ENCODE measurements at regions of chr11 and their contacts with region 1.

Region 1: GRCh38 chr11:47980245-47981049 is at the start of gene PTPRJ:
- DNase-seq: peak; percentile 71
- ATAC-seq: peak; percentile 66
- H3K4me3 Mint-ChIP-seq: peak within 1 kb of the TSS; percentile 86
- H3K27ac Mint-ChIP-seq: peak within 1 kb of the TSS; percentile 2
- H3K4me1 Mint-ChIP-seq: peaks cover 33% of the 10 kb centered on the region
- H3K27me3 Mint-ChIP-seq: no peaks in the 10 kb centered on the region
- CTCF ChIP-seq: no peak
- total RNA-seq, gene PTPRJ: 18.8 and 19.2 TPM in 2 replicates

Region 2: DNA sequence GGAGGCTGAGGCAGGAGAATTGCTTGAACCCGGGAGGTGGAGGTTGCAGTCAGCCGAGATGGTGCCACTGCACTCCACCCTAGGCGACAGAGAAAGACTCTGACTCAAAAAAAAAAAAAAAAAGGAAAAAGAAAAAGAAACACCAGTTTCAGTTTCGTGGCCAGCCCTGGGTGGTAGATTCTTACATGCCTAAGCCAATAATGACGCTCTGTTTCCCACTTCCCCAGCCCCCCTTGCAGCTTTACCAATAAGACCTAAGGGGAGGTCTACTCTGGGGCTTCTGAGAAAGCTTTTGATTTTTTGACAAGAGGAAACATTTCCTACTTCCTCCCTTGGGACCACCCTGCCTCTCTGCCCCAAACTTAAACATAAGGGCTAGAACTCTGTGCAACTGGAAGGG is 30.1 kb before region 1 on chr11:
- CTCF ChIA-PET with region 1: no interaction called
- POLR2A ChIA-PET with region 1: interaction called, 4 read pairs
- intact Hi-C with region 1: loop called (anchors 1 kb)
- DNase-seq: peak; percentile 47
- ATAC-seq: peak; percentile 97
- H3K4me3 Mint-ChIP-seq: peak overlapping the region; percentile 26
- H3K27ac Mint-ChIP-seq: peak overlapping the region; percentile 79
- H3K4me1 Mint-ChIP-seq: peaks cover 54% of the 10 kb centered on the region
- H3K27me3 Mint-ChIP-seq: no peaks in the 10 kb centered on the region
- CTCF ChIP-seq: no peak

Region 3: DNA sequence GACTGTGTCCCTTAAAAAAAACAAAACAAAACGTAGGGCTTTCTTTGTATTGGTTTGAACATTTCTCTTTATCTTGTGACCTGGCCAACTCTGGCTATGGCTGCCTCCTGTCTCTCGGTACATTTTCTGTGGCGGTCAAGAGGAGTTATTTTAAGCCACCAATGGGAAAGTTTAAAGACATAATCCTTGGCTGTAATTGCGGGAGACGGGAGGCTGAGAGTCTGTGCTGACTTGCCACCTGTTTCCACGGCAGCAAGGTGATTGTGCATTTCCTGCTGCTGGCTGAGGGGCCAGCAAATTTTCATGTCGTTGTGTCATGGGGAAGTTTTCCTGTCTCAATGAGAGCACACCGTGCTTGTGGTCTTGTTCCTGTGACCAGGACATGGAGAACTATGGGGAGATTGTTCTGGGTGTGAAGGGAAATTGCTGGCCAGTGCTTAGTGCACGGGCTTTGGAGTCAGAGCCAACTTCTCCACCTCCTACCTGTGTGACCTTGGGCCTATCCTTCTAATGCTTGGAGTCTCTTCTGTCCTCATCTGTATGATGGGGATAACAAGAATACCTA is 10.9 kb after region 1 on chr11:
- CTCF ChIA-PET with region 1: no interaction called
- POLR2A ChIA-PET with region 1: interaction called, 4 read pairs
- intact Hi-C with region 1: loop called (anchors 1 kb)
- DNase-seq: no peak
- ATAC-seq: peak; percentile 28
- H3K4me3 Mint-ChIP-seq: peak overlapping the region; percentile 49
- H3K27ac Mint-ChIP-seq: peak overlapping the region; percentile 72
- H3K4me1 Mint-ChIP-seq: peaks cover 62% of the 10 kb centered on the region
- H3K27me3 Mint-ChIP-seq: no peaks in the 10 kb centered on the region
- CTCF ChIP-seq: no peak

Region 4: DNA sequence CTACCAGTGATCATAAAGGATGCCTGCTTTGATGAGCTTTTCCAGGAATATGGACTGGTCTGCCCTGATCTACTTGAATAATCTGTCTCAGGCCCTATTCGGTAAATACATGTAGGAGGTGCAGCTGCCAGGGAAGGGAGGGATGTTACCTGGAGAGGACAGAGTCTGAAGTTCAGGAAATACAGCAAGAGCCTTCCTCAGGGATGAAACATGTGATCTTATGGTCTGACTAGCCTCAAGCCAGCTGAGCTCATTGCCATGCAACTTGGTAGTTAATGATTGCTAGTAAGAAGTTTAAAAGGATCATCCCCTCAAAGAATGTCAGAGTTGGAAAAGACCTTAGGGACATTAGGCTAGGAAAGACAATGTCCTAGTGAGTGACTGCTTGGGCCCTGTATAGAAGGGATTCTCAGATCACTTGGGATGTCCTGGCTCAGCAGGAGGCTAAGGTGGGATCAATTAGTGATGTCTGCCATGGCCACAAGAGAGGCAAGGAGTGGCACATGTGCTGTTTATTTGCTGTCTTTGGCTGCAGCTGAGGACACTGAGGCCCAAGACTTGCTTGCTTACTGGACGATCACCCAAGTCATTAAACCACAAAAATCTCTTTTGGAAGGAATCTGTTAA is 18.4 kb after region 1 on chr11:
- CTCF ChIA-PET with region 1: no interaction called
- POLR2A ChIA-PET with region 1: interaction called, 6 read pairs
- intact Hi-C with region 1: loop called (anchors 2 kb)
- DNase-seq: no peak
- ATAC-seq: no peak
- H3K4me3 Mint-ChIP-seq: no peak overlapping the region
- H3K27ac Mint-ChIP-seq: peak overlapping the region; percentile 82
- H3K4me1 Mint-ChIP-seq: peaks cover 70% of the 10 kb centered on the region
- H3K27me3 Mint-ChIP-seq: no peaks in the 10 kb centered on the region
- CTCF ChIP-seq: no peak